ENCODE measurements at regions of chr22 and their contacts with region 1.

Region 1: DNA sequence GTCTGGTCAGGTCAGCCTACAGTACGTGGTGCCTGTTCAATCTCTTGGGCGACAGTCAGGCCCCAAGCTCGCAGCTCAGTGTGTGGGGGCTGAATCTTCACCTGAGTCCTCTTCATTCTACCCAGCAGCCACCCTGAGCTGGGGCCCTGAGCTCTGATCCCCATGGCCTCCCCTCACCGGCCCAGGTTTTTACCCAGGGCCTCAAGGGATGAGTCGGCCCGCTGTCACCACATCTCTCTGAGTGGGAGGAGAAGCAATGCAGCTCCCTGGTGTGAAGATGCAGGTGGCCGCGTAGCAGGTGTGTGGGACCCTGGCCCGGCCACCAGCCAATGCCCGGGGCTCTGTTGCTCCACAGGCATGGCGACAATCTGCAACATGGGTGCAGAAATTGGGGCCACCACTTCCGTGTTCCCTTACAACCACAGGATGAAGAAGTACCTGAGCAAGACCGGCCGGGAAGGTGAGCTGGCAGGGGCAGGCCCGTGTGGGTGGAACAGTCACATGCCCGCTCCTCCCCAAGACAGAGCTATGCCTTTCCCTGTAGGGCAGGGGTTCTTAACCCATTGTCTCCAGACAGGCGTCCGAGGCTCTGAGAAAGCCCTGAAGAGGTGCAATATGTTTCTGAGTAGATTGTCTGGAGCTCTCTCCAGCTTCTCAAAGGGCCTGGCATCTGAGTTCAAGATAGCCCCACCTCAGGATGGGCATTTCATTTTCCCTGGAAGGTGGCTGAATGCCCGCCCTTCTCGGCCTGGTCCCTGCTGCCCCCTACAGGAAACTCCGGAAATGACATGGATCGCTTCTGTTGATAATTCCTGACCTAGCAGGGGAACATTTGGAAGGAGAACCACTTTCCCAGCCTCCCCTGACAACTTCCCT is 26.9 kb downstream of the POLR3H start:
- DNase-seq: peak; percentile 64 to 75
- H3K4me3 ChIP-seq: no peak overlapping the region
- H3K27ac ChIP-seq: peak overlapping the region in 1 of 3 donors; percentile 11
- H3K4me1 ChIP-seq: peaks cover 0 to 11% of the 10 kb centered on the region in 2 donors
- H3K27me3 ChIP-seq: no peaks in the 10 kb centered on the region
- CTCF ChIP-seq: peak; percentile 71 to 90 (median 82)
- POLR2A ChIP-seq: no peak

Region 2: DNA sequence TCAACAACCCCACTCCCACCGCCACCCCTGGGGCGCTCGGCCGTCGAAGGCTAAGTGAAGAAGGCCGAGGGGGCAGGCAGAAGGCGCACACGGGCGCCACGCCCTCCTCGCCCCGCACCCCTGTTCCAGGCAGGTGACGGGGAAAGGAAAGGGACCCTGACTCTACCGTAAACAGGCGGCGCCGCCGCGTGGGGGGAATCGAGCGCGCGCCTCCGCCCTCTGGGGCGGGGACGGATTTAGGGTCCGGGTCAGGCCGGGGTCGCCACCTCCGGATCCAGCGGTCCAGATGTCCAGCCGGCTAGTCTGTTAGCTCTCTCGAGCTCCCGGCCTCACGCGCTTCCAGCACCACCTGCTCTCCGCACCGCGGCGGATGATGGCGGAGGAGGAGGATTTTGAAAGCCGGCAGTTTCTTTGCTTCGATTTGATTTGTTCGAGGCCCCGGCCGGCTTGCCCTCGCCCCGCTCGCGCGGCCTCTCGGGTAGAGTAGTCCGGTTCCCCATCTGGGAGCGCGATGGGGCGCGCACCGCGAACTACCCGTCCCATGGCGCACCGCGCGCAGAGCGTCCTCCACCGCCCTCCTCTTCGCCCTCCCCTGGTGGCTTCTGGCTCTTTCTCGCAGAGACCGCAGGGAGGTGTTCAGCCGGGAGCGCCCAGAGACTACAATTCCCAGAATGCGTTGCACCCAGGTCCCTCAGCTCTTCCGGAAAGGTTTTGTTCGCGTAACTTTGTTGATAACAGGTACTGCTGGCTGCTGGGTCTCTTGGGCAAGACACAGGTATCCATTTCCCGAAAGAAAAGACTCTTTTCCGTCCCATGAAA is 231.4 kb before region 1 on chr22 and contains the start of gene RANGAP1:
- intact Hi-C with region 1: loop called (anchors 10 kb)
- DNase-seq: peak; percentile 98 to 99
- H3K4me3 ChIP-seq: peak within 1 kb of the TSS; percentile 38 to 89 (median 86)
- H3K27ac ChIP-seq: peak within 1 kb of the TSS; percentile 80 to 98 (median 86)
- H3K4me1 ChIP-seq: peaks cover 21 to 31% of the 10 kb centered on the region in 2 donors
- H3K27me3 ChIP-seq: no peaks in the 10 kb centered on the region
- CTCF ChIP-seq: peak in 3 of 6 experiments; percentile 15 to 28 (median 26)
- POLR2A ChIP-seq: peak; percentile 78 to 97
- total RNA-seq, gene RANGAP1: 35.5 to 42.7 (median 38.8) TPM

Region 3: GRCh38 chr22:41403532-41404318 is 113.7 kb before region 1 on chr22:
- intact Hi-C with region 1: loop called (anchors 5 kb)
- DNase-seq: peak; percentile 92 to 97
- H3K4me3 ChIP-seq: no peak overlapping the region
- H3K27ac ChIP-seq: peak overlapping the region in 1 of 3 donors; percentile 52
- H3K4me1 ChIP-seq: peaks cover 23 to 25% of the 10 kb centered on the region in 2 donors
- H3K27me3 ChIP-seq: no peaks in the 10 kb centered on the region
- CTCF ChIP-seq: peak; percentile 71 to 99 (median 98)
- POLR2A ChIP-seq: peak in 1 of 2 donors; percentile 21

Region 4: GRCh38 chr22:41458161-41458728 is 59.2 kb before region 1 on chr22:
- intact Hi-C with region 1: loop called (anchors 10 kb)
- DNase-seq: no peak
- H3K4me3 ChIP-seq: no peak overlapping the region
- H3K27ac ChIP-seq: no peak overlapping the region
- H3K4me1 ChIP-seq: no peaks in the 10 kb centered on the region
- H3K27me3 ChIP-seq: no peaks in the 10 kb centered on the region
- CTCF ChIP-seq: no peak
- POLR2A ChIP-seq: no peak

Measured in thyroid gland (tissue), 4 donors.